Activated CD8-positive, alpha-beta T cell treated with anti-CD3 and anti-CD28 coated beads for 36 hours (primary cell): ENCODE measurements at regions of chr13 and their contacts with region 1.

Region 1: GRCh38 chr13:99307648-99308339 is 595 bp upstream of the GPR183 start:
- DNase-seq: peak; percentile 86
- ATAC-seq: peak; percentile 86
- H3K4me3 Mint-ChIP-seq: peak overlapping the region; percentile 76
- H3K27ac Mint-ChIP-seq: peak overlapping the region; percentile 93
- H3K4me1 Mint-ChIP-seq: peaks cover 85% of the 10 kb centered on the region
- H3K27me3 Mint-ChIP-seq: no peaks in the 10 kb centered on the region
- CTCF ChIP-seq: no peak

Region 2: DNA sequence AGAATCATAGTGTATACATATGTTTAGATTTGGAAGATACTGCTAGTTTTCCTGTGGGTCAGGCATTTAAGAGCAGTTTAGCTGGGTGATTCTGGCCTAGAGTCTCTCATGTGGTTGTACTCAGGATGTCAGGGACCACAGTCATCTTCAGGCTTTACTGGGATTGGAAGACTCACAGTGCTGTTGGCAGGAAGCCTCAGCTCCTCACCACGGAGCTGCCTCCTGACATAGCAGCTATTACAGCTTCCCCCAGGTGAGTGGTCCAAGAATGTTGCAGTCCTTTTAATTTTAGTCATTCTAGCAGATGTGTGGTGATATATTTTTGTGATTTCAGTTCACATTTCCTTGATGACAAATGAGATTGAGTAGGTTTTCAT is 32.7 kb before region 1 on chr13:
- CTCF ChIA-PET with region 1: interaction called, 29 read pairs
- POLR2A ChIA-PET with region 1: interaction called, 8 read pairs
- intact Hi-C with region 1: loop called (anchors 5 kb)
- DNase-seq: peak; percentile 69
- ATAC-seq: peak; percentile 82
- H3K4me3 Mint-ChIP-seq: no peak overlapping the region
- H3K27ac Mint-ChIP-seq: peak overlapping the region; percentile 80
- H3K4me1 Mint-ChIP-seq: peaks cover 93% of the 10 kb centered on the region
- H3K27me3 Mint-ChIP-seq: no peaks in the 10 kb centered on the region
- CTCF ChIP-seq: no peak

Region 3: GRCh38 chr13:99296398-99296797 is 11.4 kb before region 1 on chr13:
- CTCF ChIA-PET with region 1: interaction called, 9 read pairs
- POLR2A ChIA-PET with region 1: interaction called, 6 read pairs
- intact Hi-C with region 1: loop called (anchors 2 kb)
- DNase-seq: peak; percentile 41
- ATAC-seq: peak; percentile 76
- H3K4me3 Mint-ChIP-seq: peak overlapping the region; percentile 58
- H3K27ac Mint-ChIP-seq: peak overlapping the region; percentile 89
- H3K4me1 Mint-ChIP-seq: peaks cover 74% of the 10 kb centered on the region
- H3K27me3 Mint-ChIP-seq: no peaks in the 10 kb centered on the region
- CTCF ChIP-seq: no peak

Region 4: DNA sequence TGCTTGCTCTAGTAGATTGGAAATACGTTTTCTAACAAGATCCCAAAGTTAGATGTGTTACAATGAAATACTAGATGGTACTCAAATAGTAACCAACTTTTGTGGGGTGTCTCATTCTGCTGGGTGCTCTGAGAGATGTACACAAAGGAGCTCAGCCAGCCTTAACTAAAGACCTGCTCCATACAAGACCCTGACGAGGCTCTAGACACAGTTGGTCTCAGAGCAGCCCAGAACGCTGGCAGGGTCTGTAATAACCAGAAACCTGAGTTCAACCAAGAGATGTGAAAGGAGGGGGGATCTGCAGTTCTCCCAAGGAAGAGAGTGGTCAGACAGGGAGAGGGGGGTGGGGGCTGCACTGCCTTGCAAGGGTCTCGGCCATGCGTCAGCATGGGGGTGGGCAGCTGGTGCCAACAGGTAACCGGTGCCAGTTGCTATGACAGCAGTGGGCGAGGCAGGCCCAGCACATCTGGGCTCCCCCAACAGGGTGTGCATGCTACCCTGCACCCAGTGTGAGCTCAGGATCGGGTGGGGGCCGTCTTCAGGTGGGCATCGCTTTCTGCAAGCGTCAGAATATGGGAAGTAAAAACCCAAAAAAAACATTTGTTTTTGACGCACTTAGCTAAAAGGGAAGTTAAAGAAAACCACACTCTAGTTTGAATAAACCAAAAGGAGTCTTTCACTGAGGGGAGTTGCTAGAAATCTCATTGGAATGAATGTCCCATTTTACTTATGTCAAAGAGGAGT is 67.4 kb after region 1 on chr13:
- CTCF ChIA-PET with region 1: no interaction called
- POLR2A ChIA-PET with region 1: no interaction called
- intact Hi-C with region 1: no loop called
- DNase-seq: peak; percentile 42
- ATAC-seq: peak; percentile 41
- H3K4me3 Mint-ChIP-seq: no peak overlapping the region
- H3K27ac Mint-ChIP-seq: peak overlapping the region; percentile 81
- H3K4me1 Mint-ChIP-seq: peaks cover 86% of the 10 kb centered on the region
- H3K27me3 Mint-ChIP-seq: no peaks in the 10 kb centered on the region
- CTCF ChIP-seq: no peak

Region 5: GRCh38 chr13:99393791-99394735 is 86.3 kb after region 1 on chr13:
- CTCF ChIA-PET with region 1: no interaction called
- POLR2A ChIA-PET with region 1: no interaction called
- intact Hi-C with region 1: no loop called
- DNase-seq: peak; percentile 4
- ATAC-seq: no peak
- H3K4me3 Mint-ChIP-seq: no peak overlapping the region
- H3K27ac Mint-ChIP-seq: no peak overlapping the region
- H3K4me1 Mint-ChIP-seq: peaks cover 30% of the 10 kb centered on the region
- H3K27me3 Mint-ChIP-seq: no peaks in the 10 kb centered on the region
- CTCF ChIP-seq: no peak

Region 6: DNA sequence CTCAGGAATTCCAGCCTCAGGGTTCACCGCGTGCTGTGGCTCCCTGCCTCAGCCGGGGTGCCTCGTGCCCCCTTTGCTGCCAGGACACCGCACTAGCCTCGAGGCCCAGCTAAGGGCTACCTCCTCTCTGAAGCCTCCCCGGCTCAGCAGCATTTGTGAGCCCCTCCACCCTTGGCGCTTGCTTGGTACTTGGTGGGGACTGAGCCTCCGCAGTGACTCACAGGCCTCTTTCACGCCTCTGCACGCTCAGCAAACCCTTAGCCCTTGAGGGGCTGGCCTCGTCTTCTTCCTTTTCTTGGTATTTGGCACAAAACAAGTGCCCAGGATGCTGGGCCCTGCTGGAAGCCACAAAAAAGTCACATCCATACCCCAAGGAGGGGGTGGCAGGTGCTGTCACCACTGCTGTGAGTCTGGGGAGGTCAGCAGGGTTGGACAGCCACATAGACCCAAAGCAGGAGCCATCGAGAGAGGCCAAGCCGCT is 108.1 kb after region 1 on chr13:
- CTCF ChIA-PET with region 1: no interaction called
- POLR2A ChIA-PET with region 1: no interaction called
- intact Hi-C with region 1: no loop called
- DNase-seq: peak; percentile 88
- ATAC-seq: peak; percentile 63
- H3K4me3 Mint-ChIP-seq: no peak overlapping the region
- H3K27ac Mint-ChIP-seq: no peak overlapping the region
- H3K4me1 Mint-ChIP-seq: peaks cover 64% of the 10 kb centered on the region
- H3K27me3 Mint-ChIP-seq: no peaks in the 10 kb centered on the region
- CTCF ChIP-seq: no peak

Region 7: DNA sequence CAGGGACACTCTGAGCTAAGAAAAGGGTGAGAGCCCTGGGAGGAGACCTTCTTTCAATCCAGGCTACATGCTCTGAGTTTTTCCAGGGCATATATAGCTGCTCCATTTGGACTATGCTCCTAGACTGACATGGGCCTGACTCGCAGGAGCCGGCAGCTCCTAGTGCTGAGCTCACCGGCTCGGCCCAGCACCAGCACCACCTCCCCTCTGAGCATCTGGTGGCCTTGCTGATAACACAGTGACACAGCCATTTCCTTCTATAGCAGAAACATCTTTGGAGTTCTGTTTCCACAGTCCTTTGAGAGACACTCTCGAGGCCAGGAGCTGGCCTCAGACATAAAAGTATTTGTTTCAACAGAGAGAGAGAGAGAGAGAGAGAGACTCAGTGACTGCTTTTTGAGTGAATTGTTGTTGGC is 378.4 kb after region 1 on chr13:
- CTCF ChIA-PET with region 1: no interaction called
- POLR2A ChIA-PET with region 1: no interaction called
- intact Hi-C with region 1: no loop called
- DNase-seq: no peak
- ATAC-seq: no peak
- H3K4me3 Mint-ChIP-seq: no peak overlapping the region
- H3K27ac Mint-ChIP-seq: no peak overlapping the region
- H3K4me1 Mint-ChIP-seq: no peaks in the 10 kb centered on the region
- H3K27me3 Mint-ChIP-seq: no peaks in the 10 kb centered on the region
- CTCF ChIP-seq: no peak